CD14-positive monocyte (primary cell): ENCODE measurements at regions of chr19 and their contacts with region 1.

Region 1: DNA sequence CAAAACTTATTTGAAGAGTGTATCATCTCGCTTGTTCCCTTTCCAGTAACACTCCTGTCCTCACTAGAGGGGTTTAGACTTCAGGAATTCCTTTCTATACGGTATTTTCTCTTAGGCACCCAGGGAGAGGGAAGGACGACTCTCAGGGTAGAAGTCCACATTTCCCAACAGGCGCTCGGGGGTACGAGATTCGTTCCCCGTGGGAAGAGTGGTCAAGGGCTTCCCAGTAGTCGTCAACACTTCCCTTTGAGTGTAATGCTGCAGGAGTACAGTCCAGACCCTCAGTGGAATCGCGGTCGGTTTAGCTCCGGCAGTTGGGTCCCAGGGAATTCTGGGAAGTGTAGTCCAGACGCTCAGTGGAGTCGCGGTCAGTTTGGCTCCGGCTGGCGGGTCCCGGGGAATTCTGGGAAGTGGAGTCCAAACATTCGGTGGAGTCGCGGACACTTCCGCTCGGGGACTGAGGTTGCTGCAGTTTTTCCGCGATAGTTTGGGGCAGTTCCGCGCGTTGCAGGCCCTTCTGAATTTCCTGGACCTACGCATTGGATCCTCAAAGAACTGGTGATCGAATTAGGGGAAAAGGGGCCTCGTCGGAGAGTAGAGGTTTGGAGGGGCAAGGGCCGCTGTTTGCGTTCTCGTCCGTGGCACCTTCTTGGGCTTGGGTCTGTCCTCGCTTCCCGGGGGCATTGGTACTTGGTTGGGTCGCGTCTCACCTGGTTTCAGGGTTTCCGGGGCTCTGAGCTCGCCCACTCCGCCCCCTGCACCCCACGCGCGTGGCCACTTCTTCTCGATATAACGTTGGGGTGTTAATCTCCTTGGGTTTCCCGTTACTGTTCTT is at the start of gene ZNF224:
- DNase-seq: peak; percentile 78 to 86 (median 82)
- H3K4me3 ChIP-seq: peak within 1 kb of the TSS; percentile 40 to 99 (median 85)
- H3K4me3 Mint-ChIP-seq: peak within 1 kb of the TSS; percentile 97 to 99
- H3K27ac ChIP-seq: peak within 1 kb of the TSS; percentile 37 to 81
- H3K27ac Mint-ChIP-seq: peak within 1 kb of the TSS; percentile 73 to 91 (median 81)
- H3K4me1 ChIP-seq: peaks cover 5 to 13% of the 10 kb centered on the region in 2 donors
- H3K4me1 Mint-ChIP-seq: peaks cover 9% of the 10 kb centered on the region
- H3K27me3 ChIP-seq: no peaks in the 10 kb centered on the region
- H3K27me3 Mint-ChIP-seq: peaks cover 2 to 3% (median 3%) of the 10 kb centered on the region in 3 donors
- CTCF ChIP-seq: no peak
- polyA plus RNA-seq, gene ZNF224: 2.9 to 30.1 (median 3.5) TPM

Region 2: GRCh38 chr19:43826787-43827754 is 267.1 kb before region 1 on chr19 and contains the start of gene ZNF283:
- intact Hi-C with region 1: loop called in 1 of 2 experiments (anchors 10 kb)
- DNase-seq: peak; percentile 55 to 69 (median 69)
- H3K4me3 ChIP-seq: peak within 1 kb of the TSS; percentile 61 to 84 (median 69)
- H3K4me3 Mint-ChIP-seq: peak within 1 kb of the TSS; percentile 90 to 93
- H3K27ac ChIP-seq: peak within 1 kb of the TSS; percentile 22 to 72
- H3K27ac Mint-ChIP-seq: peak within 1 kb of the TSS; percentile 17 to 91 (median 60)
- H3K4me1 ChIP-seq: peaks cover 11 to 15% of the 10 kb centered on the region in 2 donors
- H3K4me1 Mint-ChIP-seq: peaks cover 15% of the 10 kb centered on the region
- H3K27me3 ChIP-seq: peaks cover under 1 to 4% of the 10 kb centered on the region in 2 donors
- H3K27me3 Mint-ChIP-seq: peaks cover 11 to 27% (median 13%) of the 10 kb centered on the region in 3 donors
- CTCF ChIP-seq: no peak
- polyA plus RNA-seq, gene ZNF283: 0.80 to 2.5 (median 2.0) TPM

Region 3: DNA sequence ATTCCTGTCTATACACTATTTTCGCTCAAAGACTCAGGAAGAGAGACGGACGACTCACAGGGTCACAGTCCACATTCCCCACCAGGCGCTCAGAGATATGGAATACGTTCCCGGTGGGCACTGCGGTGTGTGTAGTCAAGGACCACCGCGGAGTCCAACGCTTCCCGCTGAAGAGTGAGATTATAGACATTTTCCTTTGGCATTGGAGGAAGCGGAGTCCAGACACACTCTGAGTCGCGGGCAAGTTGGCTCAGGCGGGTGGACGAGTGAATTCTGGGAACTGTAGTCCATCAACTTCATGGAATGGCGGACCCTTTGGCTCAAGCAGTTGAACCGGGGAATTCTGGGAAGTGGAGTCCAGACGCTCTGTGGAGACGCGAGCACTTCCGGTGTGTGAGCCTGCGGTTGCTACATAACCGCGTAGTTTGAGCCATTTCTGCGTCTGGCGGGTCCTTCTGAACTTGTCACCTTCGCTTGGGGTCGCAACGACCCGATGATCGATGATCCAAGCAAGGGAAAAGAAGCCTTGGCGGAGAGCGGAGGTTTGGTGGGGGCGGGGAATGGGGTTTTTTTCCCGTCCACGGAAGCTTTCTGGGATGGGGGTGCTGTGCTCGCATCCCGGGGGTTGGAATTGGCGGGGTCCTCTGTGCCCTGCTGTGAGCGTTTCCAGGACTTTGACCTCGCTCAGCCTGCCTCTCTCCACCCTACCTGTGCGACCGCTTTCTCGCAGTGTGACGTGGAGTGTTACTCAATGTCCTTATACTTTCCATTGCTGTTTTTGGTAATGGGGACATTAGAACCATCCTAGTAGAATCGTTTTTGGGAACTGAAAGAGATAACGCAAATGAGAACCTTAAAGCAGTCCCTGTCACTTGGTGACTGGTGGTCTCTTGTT is 91.3 kb before region 1 on chr19 and contains the start of gene ZNF230:
- intact Hi-C with region 1: loop called (anchors 2 to 5 kb)
- DNase-seq: peak; percentile 92 to 97 (median 95)
- H3K4me3 ChIP-seq: peak within 1 kb of the TSS; percentile 82 to 98 (median 92)
- H3K4me3 Mint-ChIP-seq: peak within 1 kb of the TSS; percentile 96 to 99
- H3K27ac ChIP-seq: peak within 1 kb of the TSS; percentile 83 to 86
- H3K27ac Mint-ChIP-seq: peak within 1 kb of the TSS; percentile 93 to 99 (median 96)
- H3K4me1 ChIP-seq: peaks cover 31 to 34% of the 10 kb centered on the region in 2 donors
- H3K4me1 Mint-ChIP-seq: peaks cover 31% of the 10 kb centered on the region
- H3K27me3 ChIP-seq: no peaks in the 10 kb centered on the region
- H3K27me3 Mint-ChIP-seq: peaks cover 0 to 4% (median 2%) of the 10 kb centered on the region in 3 donors
- CTCF ChIP-seq: no peak
- polyA plus RNA-seq, gene ZNF230: 1.0 to 3.9 (median 1.3) TPM

Region 4: DNA sequence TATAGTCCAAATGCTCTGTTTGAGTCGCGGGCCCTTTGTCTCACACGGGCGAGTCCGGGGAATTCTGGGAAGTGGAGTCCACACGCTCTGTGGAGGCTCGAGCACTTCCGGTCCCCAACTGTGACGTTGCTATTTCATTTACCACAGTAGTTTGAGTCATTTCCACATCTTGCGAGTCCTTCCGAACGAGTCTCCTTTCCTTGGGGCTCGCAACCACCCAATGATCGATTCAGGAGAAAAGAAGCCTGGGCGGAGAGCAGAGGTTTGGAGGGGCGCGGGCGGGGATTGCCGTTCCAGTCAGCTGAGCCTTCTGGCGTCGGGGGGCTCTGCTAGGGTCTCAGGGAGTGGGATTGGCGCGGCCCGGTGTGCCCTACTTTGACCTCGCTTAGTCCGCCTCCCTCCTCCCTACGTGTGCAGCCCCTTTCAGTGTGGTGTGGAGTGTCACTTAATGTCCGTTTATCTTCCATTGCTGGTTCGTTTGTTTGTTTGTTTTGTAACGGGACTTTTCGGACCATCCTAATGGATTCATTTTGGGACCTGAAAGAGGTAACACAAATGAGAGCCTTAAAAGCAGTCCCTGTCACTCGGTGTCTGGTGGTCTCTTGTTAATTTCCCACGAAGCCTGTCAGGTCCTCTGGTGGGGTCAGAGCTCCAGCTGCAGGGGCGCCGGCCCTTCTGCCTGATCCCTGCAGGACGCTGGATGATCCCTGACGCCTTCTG is 68.8 kb before region 1 on chr19 and contains the start of gene ZNF222:
- intact Hi-C with region 1: loop called in 1 of 2 experiments (anchors 1 kb)
- DNase-seq: peak; percentile 81 to 91 (median 88)
- H3K4me3 ChIP-seq: peak within 1 kb of the TSS; percentile 77 to 98 (median 78)
- H3K4me3 Mint-ChIP-seq: peak within 1 kb of the TSS; percentile 97 to 98
- H3K27ac ChIP-seq: peak within 1 kb of the TSS; percentile 34 to 88
- H3K27ac Mint-ChIP-seq: peak within 1 kb of the TSS; percentile 80 to 94 (median 85)
- H3K4me1 ChIP-seq: peaks cover 13 to 15% of the 10 kb centered on the region in 2 donors
- H3K4me1 Mint-ChIP-seq: peaks cover 17% of the 10 kb centered on the region
- H3K27me3 ChIP-seq: no peaks in the 10 kb centered on the region
- H3K27me3 Mint-ChIP-seq: peaks cover 1 to 4% (median 2%) of the 10 kb centered on the region in 3 donors
- CTCF ChIP-seq: no peak
- polyA plus RNA-seq, gene ZNF222: 1.0 to 1.5 (median 1.1) TPM

Region 5: DNA sequence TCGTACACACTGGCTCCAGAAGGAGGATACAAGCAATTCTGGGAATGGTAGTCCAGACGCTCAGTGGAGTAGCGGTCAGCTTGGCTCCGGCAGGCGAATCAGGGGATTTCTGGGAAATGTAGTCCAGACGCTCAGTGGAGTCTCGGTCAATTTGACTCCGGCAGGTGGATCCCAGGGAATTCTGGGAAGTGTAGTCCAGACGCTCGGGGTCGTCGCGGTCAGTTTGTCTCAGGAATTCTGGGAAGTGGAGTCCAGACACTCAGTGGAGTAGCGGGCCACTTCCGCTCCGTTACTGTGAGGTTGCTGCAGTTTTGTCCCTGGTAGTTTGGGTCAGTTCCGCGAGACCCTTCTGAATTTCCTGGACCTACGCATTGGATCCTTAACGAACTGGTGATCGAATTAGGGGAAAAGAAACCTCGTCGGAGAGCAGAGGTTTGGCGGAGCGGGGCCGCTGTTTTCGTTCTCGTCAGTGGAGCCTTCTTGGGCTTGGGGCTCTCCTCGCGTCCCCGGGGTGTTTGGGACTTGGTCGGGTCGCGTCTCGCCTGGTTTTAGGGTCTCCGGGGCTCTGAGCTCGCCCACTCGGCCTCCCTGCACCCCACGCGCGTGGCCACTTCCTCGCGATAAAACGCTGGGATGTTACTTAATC is 19.1 kb after region 1 on chr19 and contains the start of gene ZNF225:
- intact Hi-C with region 1: loop called (anchors 2 kb)
- DNase-seq: peak; percentile 92 to 96 (median 94)
- H3K4me3 ChIP-seq: peak within 1 kb of the TSS; percentile 92 to 94 (median 94)
- H3K4me3 Mint-ChIP-seq: peak within 1 kb of the TSS; percentile 98 to 100
- H3K27ac ChIP-seq: peak within 1 kb of the TSS; percentile 47 to 76
- H3K27ac Mint-ChIP-seq: peak within 1 kb of the TSS; percentile 87 to 95 (median 91)
- H3K4me1 ChIP-seq: peaks cover 17 to 27% of the 10 kb centered on the region in 2 donors
- H3K4me1 Mint-ChIP-seq: peaks cover 23% of the 10 kb centered on the region
- H3K27me3 ChIP-seq: no peaks in the 10 kb centered on the region
- H3K27me3 Mint-ChIP-seq: peaks cover 0 to 2% (median 0%) of the 10 kb centered on the region in 3 donors
- CTCF ChIP-seq: no peak
- polyA plus RNA-seq, gene ZNF225: 0.86 to 1.1 (median 0.93) TPM

Region 6: DNA sequence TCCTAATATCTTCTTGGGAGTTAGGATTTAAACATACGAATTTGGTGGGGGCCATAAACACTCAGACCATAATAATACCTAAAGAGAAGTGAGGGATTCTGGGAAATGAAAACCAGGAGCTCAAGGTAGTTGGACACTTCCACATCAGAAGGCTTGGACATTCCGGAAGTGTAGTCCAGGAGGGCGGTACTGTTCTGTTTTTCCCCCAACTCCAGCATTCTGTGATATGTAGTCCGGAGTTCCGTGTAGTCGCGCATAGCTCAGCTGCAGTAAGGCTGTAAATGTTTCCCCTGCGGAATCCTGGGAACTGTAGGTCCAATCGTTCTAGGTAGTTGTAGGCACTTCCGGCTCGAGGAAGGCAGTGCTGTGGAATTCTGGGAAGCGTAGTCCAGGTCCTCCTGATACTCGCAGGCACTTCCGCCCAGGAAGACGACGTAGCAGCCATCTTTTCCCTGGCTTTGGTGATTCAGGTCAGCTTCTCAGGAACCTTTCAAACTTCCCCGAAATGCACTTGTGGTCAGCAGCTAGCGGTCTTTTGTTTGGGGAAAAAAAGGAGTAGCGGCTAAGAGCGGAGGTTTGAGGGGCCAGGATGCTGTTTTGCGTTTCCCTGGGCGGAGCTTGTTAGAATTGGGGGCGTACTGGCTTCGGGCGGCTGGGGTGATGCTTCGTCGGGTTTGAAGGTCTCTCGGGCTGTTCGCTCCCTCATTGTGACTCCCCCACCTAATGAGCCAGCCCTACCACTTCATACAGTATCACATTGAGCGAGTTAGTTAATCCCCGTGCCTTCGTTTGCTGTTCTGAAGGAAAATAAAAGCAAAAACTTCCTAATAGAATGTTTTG is 70.7 kb after region 1 on chr19 and contains the start of gene ZNF226:
- intact Hi-C with region 1: loop called in 1 of 2 experiments (anchors 5 kb)
- DNase-seq: peak; percentile 89 to 96 (median 95)
- H3K4me3 ChIP-seq: peak within 1 kb of the TSS; percentile 66 to 91 (median 68)
- H3K4me3 Mint-ChIP-seq: peak within 1 kb of the TSS; percentile 98 to 99
- H3K27ac ChIP-seq: peak within 1 kb of the TSS; percentile 58 to 86
- H3K27ac Mint-ChIP-seq: peak within 1 kb of the TSS; percentile 88 to 97 (median 96)
- H3K4me1 ChIP-seq: peaks cover 11 to 16% of the 10 kb centered on the region in 2 donors
- H3K4me1 Mint-ChIP-seq: peaks cover 18% of the 10 kb centered on the region
- H3K27me3 ChIP-seq: no peaks in the 10 kb centered on the region
- H3K27me3 Mint-ChIP-seq: peaks cover 1 to 10% (median 7%) of the 10 kb centered on the region in 3 donors
- CTCF ChIP-seq: no peak
- polyA plus RNA-seq, gene ZNF226: 9.3 to 16.6 (median 16.3) TPM

Region 7: GRCh38 chr19:45323671-45324081 is 1229.5 kb after region 1 on chr19:
- intact Hi-C with region 1: no loop called
- DNase-seq: no peak
- H3K4me3 ChIP-seq: no peak overlapping the region
- H3K4me3 Mint-ChIP-seq: peak overlapping the region; percentile 24 to 52
- H3K27ac ChIP-seq: no peak overlapping the region
- H3K27ac Mint-ChIP-seq: no peak overlapping the region
- H3K4me1 ChIP-seq: peaks cover 3 to 7% of the 10 kb centered on the region in 2 donors
- H3K4me1 Mint-ChIP-seq: peaks cover 6% of the 10 kb centered on the region
- H3K27me3 ChIP-seq: peaks cover 8 to 31% of the 10 kb centered on the region in 2 donors
- H3K27me3 Mint-ChIP-seq: peaks cover 31 to 47% (median 33%) of the 10 kb centered on the region in 3 donors
- CTCF ChIP-seq: no peak